H1 (cell line): ENCODE measurements at regions of chr10 and their contacts with region 1.

Region 1: DNA sequence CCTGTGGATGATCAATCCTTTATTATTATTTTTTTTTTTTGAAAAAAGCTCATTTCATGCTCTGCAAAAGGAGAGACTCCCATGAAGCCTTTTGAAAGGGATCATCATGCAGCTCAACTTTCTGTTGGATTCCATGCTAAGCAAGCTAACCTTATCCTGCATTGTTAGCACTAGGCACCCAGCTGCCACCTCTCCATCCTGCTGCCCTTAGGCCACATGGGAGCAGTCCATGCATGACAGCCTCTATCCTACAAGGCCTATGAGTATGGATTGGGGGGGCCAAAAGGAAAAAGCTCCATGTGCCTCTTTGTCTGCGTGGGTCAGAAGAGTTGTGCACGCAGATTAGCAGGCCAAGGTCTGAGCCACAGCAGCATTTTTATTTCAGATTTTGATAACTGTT is 19.2 kb downstream of the SMNDC1 start:
- DNase-seq: no peak
- H3K4me3 ChIP-seq: no peak overlapping the region
- H3K27ac ChIP-seq: no peak overlapping the region
- H3K4me1 ChIP-seq: peaks cover 0 to 3% (median 2%) of the 10 kb centered on the region in 4 experiments; a peak in 3 of 7 replicates
- H3K27me3 ChIP-seq: no peaks in the 10 kb centered on the region
- CTCF ChIP-seq: no peak
- EP300 ChIP-seq: no peak
- POLR2A ChIP-seq: no peak
- RAD21 ChIP-seq: no peak

Region 2: GRCh38 chr10:110263164-110263563 is 22.3 kb before region 1 on chr10:
- CTCF ChIA-PET with region 1: no interaction called
- POLR2A ChIA-PET with region 1: no interaction called
- DNase-seq: no peak
- H3K4me3 ChIP-seq: no peak overlapping the region
- H3K27ac ChIP-seq: no peak overlapping the region
- H3K4me1 ChIP-seq: no peaks in the 10 kb centered on the region
- H3K27me3 ChIP-seq: no peaks in the 10 kb centered on the region
- CTCF ChIP-seq: no peak
- EP300 ChIP-seq: no peak
- POLR2A ChIP-seq: no peak
- RAD21 ChIP-seq: no peak

Region 3: GRCh38 chr10:110296966-110297365 is 11.5 kb after region 1 on chr10:
- CTCF ChIA-PET with region 1: interaction called, 5 read pairs
- POLR2A ChIA-PET with region 1: interaction called, 31 read pairs
- DNase-seq: no peak
- H3K4me3 ChIP-seq: no peak overlapping the region
- H3K27ac ChIP-seq: no peak overlapping the region
- H3K4me1 ChIP-seq: no peaks in the 10 kb centered on the region; a peak in 1 of 7 replicates
- H3K27me3 ChIP-seq: peaks cover 0 to 1% (median 0%) of the 10 kb centered on the region in 4 experiments; a peak in 1 of 7 replicates
- CTCF ChIP-seq: no peak
- EP300 ChIP-seq: no peak
- POLR2A ChIP-seq: no peak
- RAD21 ChIP-seq: no peak